SK-N-SH (cell line): ENCODE measurements at regions of chr14 and their contacts with region 1.

Region 1: DNA sequence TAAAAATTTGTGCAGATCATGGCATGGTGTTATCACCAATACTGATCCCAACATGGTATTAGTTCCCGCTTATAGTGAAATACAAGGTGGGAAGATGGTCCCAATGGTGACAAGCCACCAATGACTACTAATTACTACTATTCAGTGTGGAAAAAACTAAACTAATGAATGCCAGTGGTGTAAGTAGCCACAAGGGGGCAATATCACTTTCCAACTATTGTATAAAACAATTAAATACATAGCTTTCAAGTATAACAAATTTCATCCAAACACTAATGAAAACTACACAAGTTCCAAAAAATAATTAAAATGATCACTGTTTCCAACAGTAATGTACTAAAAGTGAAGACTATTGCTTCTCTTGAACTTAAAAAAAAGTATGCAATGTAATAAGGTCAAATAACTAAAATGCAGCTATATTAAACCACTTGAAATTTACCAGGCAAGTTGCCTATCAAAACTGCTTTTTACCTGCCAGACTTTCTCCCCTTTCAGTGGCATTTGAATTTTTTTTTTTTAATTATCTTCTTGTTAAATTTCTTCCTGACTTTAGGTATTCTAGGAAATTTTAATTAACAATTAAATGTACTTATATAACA is 58.0 kb downstream of the PAPLN start:
- DNase-seq: peak; percentile 58
- H3K4me3 ChIP-seq: no peak overlapping the region; a peak in 1 of 4 replicates
- H3K27ac ChIP-seq: no peak overlapping the region
- H3K4me1 ChIP-seq: no peaks in the 10 kb centered on the region
- H3K27me3 ChIP-seq: no peaks in the 10 kb centered on the region
- CTCF ChIP-seq: peak; percentile 95
- EP300 ChIP-seq: no peak
- RAD21 ChIP-seq: peak; percentile 70

Region 2: DNA sequence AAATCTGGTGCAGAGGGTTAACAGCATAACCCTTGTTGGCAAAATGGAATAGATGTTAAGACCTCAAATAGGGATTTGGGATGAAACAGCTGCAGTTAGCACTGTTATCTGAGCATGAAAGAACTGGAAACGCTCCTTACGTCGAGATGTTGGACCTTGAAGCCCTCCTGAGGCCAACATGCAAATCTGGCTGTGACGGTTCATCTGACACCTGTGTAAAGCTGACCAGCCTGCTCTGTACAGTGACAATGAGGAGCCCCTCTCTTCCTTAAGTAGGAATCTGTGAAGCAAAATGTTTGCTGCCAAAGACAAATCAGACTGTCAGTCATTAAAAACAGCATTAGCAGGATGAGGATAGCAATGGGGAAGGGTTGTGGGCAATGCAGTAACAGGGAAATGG is 21.5 kb before region 1 on chr14:
- CTCF ChIA-PET with region 1: interaction called, 10 read pairs
- POLR2A ChIA-PET with region 1: no interaction called
- DNase-seq: no peak
- H3K4me3 ChIP-seq: no peak overlapping the region
- H3K27ac ChIP-seq: no peak overlapping the region
- H3K4me1 ChIP-seq: no peaks in the 10 kb centered on the region
- H3K27me3 ChIP-seq: no peaks in the 10 kb centered on the region
- CTCF ChIP-seq: no peak
- EP300 ChIP-seq: no peak
- RAD21 ChIP-seq: no peak

Region 3: DNA sequence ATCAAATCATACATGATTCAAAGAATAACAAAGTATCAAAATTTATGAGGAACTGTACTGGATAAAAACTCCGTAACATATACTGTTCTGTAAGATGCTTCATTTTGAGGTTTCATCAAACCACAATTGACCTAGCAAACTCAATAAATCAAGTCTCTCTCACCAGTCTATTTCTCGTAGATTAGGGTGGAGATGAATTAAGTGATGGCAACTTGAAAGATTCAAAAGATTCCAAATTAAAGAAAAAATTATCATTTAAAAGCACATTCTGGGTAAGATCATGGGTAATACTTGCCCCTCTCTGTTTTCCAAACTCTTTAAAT is 16.4 kb after region 1 on chr14:
- CTCF ChIA-PET with region 1: interaction called, 47 read pairs
- POLR2A ChIA-PET with region 1: no interaction called
- DNase-seq: no peak
- H3K4me3 ChIP-seq: no peak overlapping the region
- H3K27ac ChIP-seq: peak overlapping the region in 1 of 2 experiments; percentile 53; a peak in 2 of 4 replicates
- H3K4me1 ChIP-seq: peaks cover 0 to 9% of the 10 kb centered on the region in 2 experiments; a peak in 1 of 4 replicates
- H3K27me3 ChIP-seq: no peaks in the 10 kb centered on the region
- CTCF ChIP-seq: no peak
- EP300 ChIP-seq: no peak
- RAD21 ChIP-seq: no peak

Region 4: GRCh38 chr14:73339846-73340595 is 44.7 kb after region 1 on chr14:
- CTCF ChIA-PET with region 1: interaction called, 10 read pairs
- POLR2A ChIA-PET with region 1: no interaction called
- DNase-seq: no peak
- H3K4me3 ChIP-seq: no peak overlapping the region
- H3K27ac ChIP-seq: no peak overlapping the region
- H3K4me1 ChIP-seq: peaks cover 6 to 9% of the 10 kb centered on the region in 2 experiments; a peak in 2 of 4 replicates
- H3K27me3 ChIP-seq: no peaks in the 10 kb centered on the region
- CTCF ChIP-seq: no peak
- EP300 ChIP-seq: no peak
- RAD21 ChIP-seq: no peak

Region 5: GRCh38 chr14:73458151-73458976 is 163.1 kb after region 1 on chr14 and contains the start of gene NUMB:
- CTCF ChIA-PET with region 1: interaction called, 41 read pairs
- POLR2A ChIA-PET with region 1: interaction called, 11 read pairs
- DNase-seq: peak; percentile 96
- H3K4me3 ChIP-seq: peak within 1 kb of the TSS; percentile 82 to 97
- H3K27ac ChIP-seq: peak within 1 kb of the TSS; percentile 78 to 89
- H3K4me1 ChIP-seq: peaks cover 36 to 69% of the 10 kb centered on the region in 2 experiments
- H3K27me3 ChIP-seq: no peaks in the 10 kb centered on the region
- CTCF ChIP-seq: no peak
- EP300 ChIP-seq: no peak
- RAD21 ChIP-seq: peak; percentile 3; the same call in 1 of the 2 replicates
- polyA plus RNA-seq, gene NUMB: 58.4 and 70.8 TPM in 2 replicates

Region 6: DNA sequence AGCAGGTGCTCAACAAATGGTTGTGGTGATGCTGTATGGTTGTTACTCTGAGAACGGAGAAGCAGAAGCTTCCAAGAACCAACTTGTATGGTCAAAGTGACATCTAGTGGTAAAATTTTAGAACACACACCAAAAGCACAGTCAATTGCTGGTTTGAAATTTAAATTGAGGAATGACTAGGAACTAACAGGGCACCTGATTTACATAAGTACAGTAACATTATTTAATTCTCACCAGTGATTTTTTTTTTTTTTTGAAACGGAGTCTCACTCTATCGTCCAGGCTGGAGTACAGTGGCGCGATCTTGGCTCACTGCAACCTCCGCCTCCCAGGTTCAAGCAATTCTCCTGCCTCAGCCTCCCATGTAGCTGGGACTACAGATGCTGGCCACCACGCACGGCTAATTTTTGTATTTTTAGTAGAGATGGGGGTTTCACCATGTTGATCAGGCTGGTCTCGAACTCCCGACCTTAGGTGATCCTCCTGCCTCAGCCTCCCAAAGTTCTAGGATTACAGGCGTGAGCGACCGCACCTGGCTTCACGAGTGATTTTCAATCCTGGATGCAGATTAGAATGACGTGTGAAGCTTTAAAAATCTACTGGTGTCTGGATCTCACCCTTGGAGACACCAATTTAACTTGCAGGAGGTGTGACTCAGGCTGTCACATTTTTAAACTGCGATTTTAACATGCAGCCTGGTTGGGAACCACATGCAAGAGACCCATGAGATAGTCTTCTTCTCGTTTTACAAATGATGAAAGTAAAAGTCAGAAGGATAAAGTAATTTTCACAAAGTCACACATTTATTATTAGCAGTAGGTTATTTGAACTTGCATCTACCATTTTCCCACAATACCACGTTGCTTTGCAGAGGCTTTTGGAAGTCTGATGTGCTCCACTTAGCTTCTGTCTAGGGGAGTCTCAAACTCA is 177.2 kb after region 1 on chr14:
- CTCF ChIA-PET with region 1: interaction called, 179 read pairs
- POLR2A ChIA-PET with region 1: interaction called, 4 read pairs
- DNase-seq: peak; percentile 67
- H3K4me3 ChIP-seq: no peak overlapping the region; a peak in 1 of 4 replicates
- H3K27ac ChIP-seq: no peak overlapping the region
- H3K4me1 ChIP-seq: no peaks in the 10 kb centered on the region
- H3K27me3 ChIP-seq: no peaks in the 10 kb centered on the region
- CTCF ChIP-seq: peak; percentile 80
- EP300 ChIP-seq: no peak
- RAD21 ChIP-seq: peak; percentile 96